ENCODE measurements at regions of chr2 and their contacts with region 1.

Region 1: DNA sequence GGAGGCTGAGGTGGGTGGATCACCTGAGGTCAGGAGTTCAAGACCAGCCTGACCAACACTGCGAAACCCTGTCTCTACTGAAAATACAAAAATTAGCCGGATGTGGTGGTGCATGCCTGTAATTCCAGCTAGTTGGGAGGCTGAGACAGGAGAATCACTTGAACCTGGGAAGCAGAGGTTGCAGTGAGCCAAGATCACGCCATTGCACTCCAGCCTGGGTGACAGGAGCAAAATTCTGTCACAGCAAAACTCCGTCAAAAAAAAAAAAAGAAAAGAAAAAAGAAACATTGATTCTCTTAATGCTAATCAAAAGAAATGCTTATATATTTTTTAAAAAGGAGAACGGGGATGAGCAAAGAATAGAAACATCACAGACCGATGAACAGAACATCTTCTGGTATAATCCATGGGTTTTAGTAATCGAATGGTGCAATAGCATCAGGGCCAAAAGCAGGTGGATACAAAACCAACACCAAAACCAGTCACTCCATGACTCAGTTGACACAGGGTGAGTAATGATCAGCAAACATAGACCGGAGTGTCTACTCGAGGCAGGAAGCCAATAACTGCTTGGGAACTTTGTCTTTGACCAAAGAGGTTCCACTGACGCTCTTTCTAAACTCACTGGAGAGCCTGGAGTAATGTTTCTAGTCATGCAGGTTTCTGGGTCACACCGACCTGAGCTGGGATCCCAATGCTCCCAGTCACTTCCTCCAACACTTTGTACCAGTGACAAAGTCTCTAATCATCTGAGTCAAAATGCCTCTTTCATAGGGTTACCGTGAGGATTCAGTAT is 31.1 kb downstream of the MREG start:
- DNase-seq: peak; percentile 61
- ATAC-seq: peak; percentile 86
- H3K4me3 Mint-ChIP-seq: no peak overlapping the region
- H3K27ac Mint-ChIP-seq: no peak overlapping the region
- H3K4me1 Mint-ChIP-seq: peaks cover 32% of the 10 kb centered on the region
- H3K27me3 Mint-ChIP-seq: no peaks in the 10 kb centered on the region

Region 2: DNA sequence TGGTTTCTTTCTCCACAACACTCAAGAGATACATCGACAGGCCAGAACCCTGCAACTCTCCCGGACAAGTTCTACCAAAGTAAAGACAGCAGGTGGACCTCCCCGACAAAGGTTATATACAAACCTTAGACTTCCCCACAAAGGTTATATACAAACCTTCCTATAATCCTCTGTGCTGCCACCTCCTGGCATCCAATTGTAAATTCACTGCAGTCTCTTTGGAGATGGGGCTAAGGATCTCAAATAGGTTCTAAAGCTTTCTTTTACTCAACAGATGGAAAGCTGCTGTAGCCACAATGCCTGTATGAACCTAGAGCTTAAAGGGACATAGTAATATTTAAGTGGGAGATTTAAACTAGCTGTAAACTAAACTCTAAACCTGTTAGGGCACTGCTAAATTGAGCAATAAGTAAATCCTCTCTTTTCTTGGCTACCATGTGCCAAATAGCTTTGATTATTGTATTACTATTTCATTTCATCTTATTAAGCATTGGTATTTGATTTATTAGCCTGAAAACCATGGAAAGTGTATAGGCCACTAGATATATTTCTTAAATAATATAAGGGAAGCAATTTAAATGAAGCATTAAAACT is 40.9 kb after region 1 on chr2:
- CTCF ChIA-PET with region 1: interaction called, 10 read pairs
- POLR2A ChIA-PET with region 1: no interaction called
- intact Hi-C with region 1: no loop called
- DNase-seq: peak; percentile 72
- ATAC-seq: peak; percentile 88
- H3K4me3 Mint-ChIP-seq: no peak overlapping the region
- H3K27ac Mint-ChIP-seq: no peak overlapping the region
- H3K4me1 Mint-ChIP-seq: peaks cover 5% of the 10 kb centered on the region
- H3K27me3 Mint-ChIP-seq: no peaks in the 10 kb centered on the region